Common myeloid progenitor, CD34-positive (primary cell): ENCODE measurements at regions of chr19 and their contacts with region 1.

Region 1: DNA sequence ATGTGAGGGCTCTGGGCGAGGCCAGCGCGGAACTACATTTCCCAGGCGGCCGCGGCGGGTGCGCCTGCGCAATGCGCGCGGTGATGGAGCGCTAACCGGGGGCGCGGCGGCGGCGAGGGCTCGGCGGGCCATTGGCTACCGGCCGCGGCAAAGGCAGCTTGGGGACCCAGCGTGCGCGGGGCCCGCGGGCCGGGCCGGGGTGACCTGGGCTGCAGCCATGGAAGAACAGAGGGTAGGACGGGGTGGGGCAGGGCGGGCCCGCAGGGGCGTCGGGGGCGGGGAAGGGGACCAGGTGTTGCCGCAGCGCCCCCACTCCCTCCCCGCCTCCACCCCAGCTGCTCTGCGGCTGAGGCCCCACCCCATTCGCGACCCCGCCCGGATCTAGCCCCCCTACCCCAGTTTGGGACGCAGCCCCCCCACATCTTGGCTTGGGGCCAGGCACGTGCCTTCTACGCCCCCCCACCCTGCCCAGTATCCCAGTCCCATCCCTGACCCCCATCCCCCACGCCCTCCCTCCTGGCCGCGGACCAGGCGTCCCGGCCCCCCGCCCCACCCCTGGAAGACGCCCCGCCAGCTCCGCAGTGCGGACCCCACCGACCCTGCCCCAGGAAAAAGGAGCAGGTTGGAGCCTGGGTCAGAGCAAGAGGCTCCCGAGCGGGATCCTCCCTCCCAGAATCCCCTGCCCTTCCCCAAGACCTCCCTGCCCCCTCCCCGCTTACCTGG is at the start of gene FSD1:
- DNase-seq: peak; percentile 52 to 73 (median 69)
- H3K4me3 ChIP-seq: peak within 1 kb of the TSS in 3 of 7 experiments; percentile 8 to 36 (median 28)
- H3K27ac ChIP-seq: no peak within 1 kb of the TSS
- H3K4me1 ChIP-seq: peaks cover 4 to 27% (median 23%) of the 10 kb centered on the region in 4 experiments
- H3K27me3 ChIP-seq: no peaks in the 10 kb centered on the region

Region 2: GRCh38 chr19:4256563-4256962 is 48.1 kb before region 1 on chr19:
- CTCF ChIA-PET with region 1: no interaction called
- POLR2A ChIA-PET with region 1: no interaction called
- DNase-seq: peak in 2 of 3 donors; percentile 55 to 59
- H3K4me3 ChIP-seq: no peak overlapping the region
- H3K27ac ChIP-seq: no peak overlapping the region
- H3K4me1 ChIP-seq: peaks cover 0 to 12% (median 0%) of the 10 kb centered on the region in 4 experiments
- H3K27me3 ChIP-seq: no peaks in the 10 kb centered on the region

Region 3: DNA sequence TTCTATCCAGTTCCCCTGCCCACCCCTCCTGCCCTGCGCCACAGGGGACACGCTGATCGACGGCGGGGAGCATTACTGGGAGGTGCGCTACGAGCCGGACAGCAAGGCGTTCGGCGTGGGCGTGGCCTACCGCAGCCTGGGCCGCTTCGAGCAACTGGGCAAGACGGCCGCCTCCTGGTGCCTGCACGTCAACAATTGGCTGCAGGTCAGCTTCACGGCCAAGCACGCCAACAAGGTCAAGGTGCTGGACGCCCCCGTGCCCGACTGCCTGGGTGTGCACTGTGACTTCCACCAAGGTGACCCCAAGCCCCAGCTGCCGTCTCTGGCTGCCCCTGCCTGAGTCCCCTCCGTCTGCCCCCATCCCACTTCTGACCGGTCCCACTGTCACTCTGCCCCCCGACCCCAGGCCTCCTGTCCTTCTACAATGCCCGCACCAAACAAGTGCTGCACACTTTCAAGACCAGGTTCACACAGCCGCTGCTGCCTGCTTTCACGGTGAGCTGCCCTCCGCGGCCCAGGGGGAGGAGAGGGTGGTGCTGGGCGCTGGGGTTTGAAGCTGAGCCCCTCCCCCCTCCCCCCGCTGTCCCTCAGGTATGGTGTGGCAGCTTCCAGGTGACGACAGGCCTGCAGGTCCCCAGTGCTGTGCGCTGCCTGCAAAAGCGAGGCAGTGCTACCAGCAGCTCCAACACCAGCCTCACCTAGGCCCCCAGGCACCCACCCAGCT is 18.4 kb after region 1 on chr19:
- CTCF ChIA-PET with region 1: interaction called, 18 read pairs
- POLR2A ChIA-PET with region 1: interaction called, 3 read pairs
- DNase-seq: no peak
- H3K4me3 ChIP-seq: no peak overlapping the region
- H3K27ac ChIP-seq: no peak overlapping the region
- H3K4me1 ChIP-seq: peaks cover 0 to 22% (median 18%) of the 10 kb centered on the region in 4 experiments
- H3K27me3 ChIP-seq: peaks cover 0 to 20% (median 7%) of the 10 kb centered on the region in 5 experiments